Right cardiac atrium (tissue), 5 donors: ENCODE measurements at regions of chr1 and their contacts with region 1.

Region 1: DNA sequence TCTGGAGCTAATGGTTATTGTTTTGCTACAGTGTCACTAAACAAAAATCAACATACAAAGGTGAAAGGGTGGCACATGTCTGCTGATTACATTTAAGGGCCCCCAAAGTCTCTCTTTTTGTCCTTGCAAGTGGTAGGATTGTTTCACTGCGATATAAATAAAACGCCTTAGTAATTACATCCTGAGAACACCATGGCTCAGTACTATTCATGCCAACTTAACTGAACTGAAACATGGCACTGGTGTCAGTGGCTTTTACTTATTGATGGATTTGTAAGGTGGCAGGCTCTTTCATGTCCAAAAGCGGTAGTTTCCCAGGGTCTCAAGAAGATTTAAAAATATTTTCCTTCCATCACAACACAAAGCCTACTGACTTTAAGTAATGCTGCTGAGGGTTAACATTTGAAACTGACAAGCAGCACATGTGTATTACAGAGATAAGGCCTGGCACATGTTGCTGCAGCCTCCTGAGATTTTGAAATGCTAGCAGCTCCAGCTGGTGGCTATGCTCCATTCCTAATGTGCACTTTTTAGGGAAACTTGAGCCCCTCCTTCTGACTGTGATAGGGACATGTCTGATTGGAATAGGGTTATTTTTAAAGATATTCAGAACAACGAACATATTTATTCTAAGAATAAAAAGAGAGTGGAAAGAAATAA is 86.8 kb downstream of the ATP1B1 start:
- DNase-seq: peak; percentile 24 to 76 (median 68)
- ATAC-seq: peak; percentile 83 to 96
- H3K4me3 ChIP-seq: no peak overlapping the region
- H3K27ac ChIP-seq: no peak overlapping the region
- H3K4me1 ChIP-seq: no peaks in the 10 kb centered on the region
- H3K27me3 ChIP-seq: no peaks in the 10 kb centered on the region

Region 2: GRCh38 chr1:168637350-168637991 is 555.9 kb before region 1 on chr1:
- intact Hi-C with region 1: loop called in 1 of 4 experiments (anchors 10 kb)
- DNase-seq: no peak
- ATAC-seq: peak; percentile 40 to 55
- H3K4me3 ChIP-seq: no peak overlapping the region
- H3K27ac ChIP-seq: no peak overlapping the region
- H3K4me1 ChIP-seq: no peaks in the 10 kb centered on the region
- H3K27me3 ChIP-seq: no peaks in the 10 kb centered on the region